ENCODE measurements at regions of chr17 and their contacts with region 1.

Region 1: DNA sequence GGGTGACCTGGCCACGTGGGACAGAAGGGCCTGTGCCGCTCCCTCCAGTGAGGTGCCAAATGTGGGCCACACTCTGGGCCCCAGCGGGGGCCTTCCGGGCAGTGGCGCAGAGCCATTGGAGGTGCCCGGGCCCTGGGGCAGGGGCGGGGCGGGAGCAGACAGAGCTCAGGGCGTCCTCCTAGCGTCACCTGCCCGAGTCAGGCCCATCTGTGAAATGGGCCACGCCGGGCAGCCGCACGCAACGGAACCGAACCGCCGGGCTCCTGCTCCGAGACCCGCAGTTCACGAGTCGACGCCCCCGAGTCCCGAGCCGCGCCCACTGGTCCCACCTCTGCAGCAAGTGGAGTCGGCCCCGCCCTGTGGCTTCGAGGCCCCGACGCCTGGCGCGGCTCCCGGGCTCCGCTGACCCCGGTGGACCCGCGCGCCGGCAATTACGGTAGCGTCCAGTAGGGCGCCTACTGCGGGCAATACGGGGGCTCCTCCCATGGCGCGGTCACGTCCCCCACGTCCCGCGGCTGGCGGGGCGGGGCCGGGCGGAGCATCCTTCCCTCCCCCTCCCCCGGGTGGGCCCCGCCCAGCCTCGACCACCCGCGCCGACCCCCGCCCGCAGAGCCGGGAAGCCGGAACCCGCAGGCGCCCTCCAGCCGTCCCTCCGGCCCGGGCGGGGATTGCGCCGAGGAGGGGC is 1.9 kb downstream of the SLC16A3 start:
- DNase-seq: no peak
- ATAC-seq: peak; percentile 78
- H3K4me3 ChIP-seq: peak overlapping the region; percentile 99
- H3K27ac ChIP-seq: peak overlapping the region; percentile 73; the same call in 1 of the 2 replicates
- H3K4me1 ChIP-seq: peaks cover 37% of the 10 kb centered on the region
- H3K27me3 ChIP-seq: no peaks in the 10 kb centered on the region
- CTCF ChIP-seq: peak; percentile 18 to 50 (median 42); a peak in 5 of 6 replicates
- EP300 ChIP-seq: no peak
- POLR2A ChIP-seq: peak; percentile 39; the same call in 1 of the 2 replicates
- RAD21 ChIP-seq: no peak

Region 2: GRCh38 chr17:82205719-82206508 is 24.9 kb before region 1 on chr17:
- CTCF ChIA-PET with region 1: interaction called, 14 read pairs
- POLR2A ChIA-PET with region 1: interaction called, 5 read pairs
- RAD21 ChIA-PET with region 1: interaction called, 7 read pairs
- SMC1A ChIA-PET with region 1: interaction called, 10 read pairs
- in situ Hi-C with region 1: no loop called
- intact Hi-C with region 1: no loop called
- DNase-seq: no peak
- ATAC-seq: peak; percentile 96
- H3K4me3 ChIP-seq: peak overlapping the region; percentile 38; the same call in 1 of the 2 replicates
- H3K27ac ChIP-seq: peak overlapping the region; percentile 78
- H3K4me1 ChIP-seq: peaks cover 9% of the 10 kb centered on the region
- H3K27me3 ChIP-seq: no peaks in the 10 kb centered on the region
- CTCF ChIP-seq: peak; percentile 96 to 97 (median 97)
- EP300 ChIP-seq: no peak
- POLR2A ChIP-seq: peak; percentile 97
- RAD21 ChIP-seq: peak; percentile 67

Region 3: GRCh38 chr17:82212331-82213250 is 18.2 kb before region 1 on chr17 and contains the start of gene CCDC57:
- CTCF ChIA-PET with region 1: interaction called, 3 read pairs
- POLR2A ChIA-PET with region 1: interaction called, 10 read pairs
- RAD21 ChIA-PET with region 1: no interaction called
- SMC1A ChIA-PET with region 1: interaction called, 3 read pairs
- in situ Hi-C with region 1: no loop called
- intact Hi-C with region 1: loop called (anchors 2 kb)
- DNase-seq: no peak
- ATAC-seq: peak; percentile 77
- H3K4me3 ChIP-seq: peak within 1 kb of the TSS; percentile 76
- H3K27ac ChIP-seq: peak within 1 kb of the TSS; percentile 72
- H3K4me1 ChIP-seq: peaks cover 29% of the 10 kb centered on the region
- H3K27me3 ChIP-seq: no peaks in the 10 kb centered on the region
- CTCF ChIP-seq: no peak
- EP300 ChIP-seq: no peak
- POLR2A ChIP-seq: peak; percentile 68
- RAD21 ChIP-seq: no peak
- polyA plus RNA-seq, gene CCDC57: 5.4 to 18.0 TPM

Region 4: GRCh38 chr17:82283208-82283749 is 52.5 kb after region 1 on chr17:
- CTCF ChIA-PET with region 1: no interaction called
- POLR2A ChIA-PET with region 1: no interaction called
- RAD21 ChIA-PET with region 1: no interaction called
- SMC1A ChIA-PET with region 1: no interaction called
- in situ Hi-C with region 1: no loop called
- intact Hi-C with region 1: no loop called
- DNase-seq: no peak
- ATAC-seq: peak; percentile 86
- H3K4me3 ChIP-seq: no peak overlapping the region
- H3K27ac ChIP-seq: no peak overlapping the region
- H3K4me1 ChIP-seq: no peaks in the 10 kb centered on the region
- H3K27me3 ChIP-seq: no peaks in the 10 kb centered on the region
- CTCF ChIP-seq: no peak
- EP300 ChIP-seq: no peak
- POLR2A ChIP-seq: no peak
- RAD21 ChIP-seq: no peak